MCF 10A (cell line): ENCODE measurements at regions of chr12 and their contacts with region 1.

Region 1: DNA sequence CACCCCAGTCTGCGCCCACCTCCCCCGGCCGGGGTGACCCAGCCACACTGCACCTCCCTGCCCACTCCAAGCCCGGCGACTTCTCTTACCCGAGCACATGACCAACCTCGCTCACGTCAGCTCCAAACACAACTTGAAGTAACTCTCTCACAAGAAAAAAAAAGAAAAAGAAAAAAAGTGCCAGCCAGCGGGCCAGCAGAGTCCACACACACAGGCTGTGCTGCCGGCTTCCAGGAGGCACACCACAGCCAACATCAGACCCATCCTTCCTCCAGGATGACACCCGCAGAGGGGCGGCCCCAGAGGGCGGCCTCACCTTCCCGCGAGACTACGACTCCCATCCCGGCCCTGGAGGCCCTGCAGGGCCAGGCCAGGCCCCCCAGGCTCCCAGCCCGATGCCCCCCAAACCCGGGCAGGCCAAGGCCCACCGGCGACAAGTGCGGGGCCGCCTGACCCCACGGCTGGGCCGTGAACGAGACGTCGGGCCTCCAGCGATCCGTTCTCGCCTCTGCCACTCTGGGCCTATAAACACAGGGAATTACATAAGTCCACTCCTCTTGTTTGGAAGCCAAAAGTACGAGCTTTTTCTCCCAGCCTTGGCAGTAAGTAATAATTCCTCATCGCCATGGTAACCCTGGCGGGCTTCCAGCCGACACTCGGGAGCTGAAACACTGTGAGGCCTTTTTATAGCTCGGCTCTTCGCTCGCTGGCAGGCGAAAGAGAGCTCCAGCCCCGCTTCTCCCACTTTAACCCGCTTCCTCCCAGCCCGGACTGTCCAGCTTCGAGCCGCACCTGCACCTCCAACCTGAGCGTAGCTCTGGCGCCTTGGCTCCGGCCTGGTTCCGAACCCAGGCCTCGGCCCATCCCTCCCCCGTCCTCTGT is 49.1 kb downstream of the NCOR2 start:
- DNase-seq: peak; percentile 99
- H3K4me3 Mint-ChIP-seq: peak overlapping the region; percentile 91
- H3K27ac Mint-ChIP-seq: peak overlapping the region; percentile 96
- H3K4me1 Mint-ChIP-seq: peaks cover 39% of the 10 kb centered on the region
- H3K27me3 Mint-ChIP-seq: no peaks in the 10 kb centered on the region
- CTCF ChIP-seq: no peak

Region 2: DNA sequence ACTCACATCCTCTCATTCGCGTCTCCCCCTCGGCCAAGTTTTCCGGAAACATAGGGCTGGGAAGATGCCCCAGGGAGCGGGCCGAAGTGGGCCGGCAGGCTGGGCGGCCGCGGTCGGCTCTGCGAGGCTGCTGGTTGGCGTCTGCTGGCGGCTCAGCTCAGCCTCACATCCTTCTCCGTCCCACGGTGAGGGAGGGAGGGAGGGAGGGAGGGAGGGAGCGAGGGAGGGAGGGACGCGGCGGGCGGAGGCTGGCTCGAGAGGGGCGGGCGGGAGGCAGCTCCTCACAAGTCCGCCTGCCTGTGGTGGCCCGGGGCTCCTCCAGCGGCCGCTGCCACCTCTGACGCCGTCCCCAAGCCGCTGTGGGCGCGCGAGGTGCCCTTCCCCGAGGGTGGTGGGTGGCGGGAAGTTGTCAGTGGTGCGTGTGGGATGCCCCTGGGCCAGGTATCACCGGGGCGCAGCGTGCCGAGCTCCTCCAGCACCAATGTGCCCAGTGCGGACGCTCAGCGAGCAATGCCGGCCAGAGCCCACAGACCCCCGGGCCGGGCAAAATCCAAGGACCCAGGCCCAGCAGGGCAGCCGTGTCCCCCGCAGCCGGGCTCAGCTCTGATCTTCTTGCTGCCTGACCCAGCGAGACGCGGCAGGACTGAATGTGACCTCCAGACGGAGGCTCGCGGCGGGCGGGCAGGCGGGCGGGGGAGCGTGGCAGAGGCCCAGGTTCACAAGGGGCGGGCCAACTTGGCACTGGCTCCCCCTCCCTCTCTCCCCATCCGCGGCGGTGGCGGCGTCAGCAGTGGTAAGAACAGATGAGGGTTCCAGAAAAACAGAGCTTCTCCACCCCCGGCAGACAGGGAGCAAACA is 129.4 kb before region 1 on chr12:
- CTCF ChIA-PET with region 1: no interaction called
- POLR2A ChIA-PET with region 1: interaction called, 5 read pairs
- intact Hi-C with region 1: loop called (anchors 10 kb)
- DNase-seq: peak; percentile 83
- H3K4me3 Mint-ChIP-seq: peak overlapping the region; percentile 81
- H3K27ac Mint-ChIP-seq: peak overlapping the region; percentile 69
- H3K4me1 Mint-ChIP-seq: peaks cover 26% of the 10 kb centered on the region
- H3K27me3 Mint-ChIP-seq: no peaks in the 10 kb centered on the region
- CTCF ChIP-seq: no peak

Region 3: DNA sequence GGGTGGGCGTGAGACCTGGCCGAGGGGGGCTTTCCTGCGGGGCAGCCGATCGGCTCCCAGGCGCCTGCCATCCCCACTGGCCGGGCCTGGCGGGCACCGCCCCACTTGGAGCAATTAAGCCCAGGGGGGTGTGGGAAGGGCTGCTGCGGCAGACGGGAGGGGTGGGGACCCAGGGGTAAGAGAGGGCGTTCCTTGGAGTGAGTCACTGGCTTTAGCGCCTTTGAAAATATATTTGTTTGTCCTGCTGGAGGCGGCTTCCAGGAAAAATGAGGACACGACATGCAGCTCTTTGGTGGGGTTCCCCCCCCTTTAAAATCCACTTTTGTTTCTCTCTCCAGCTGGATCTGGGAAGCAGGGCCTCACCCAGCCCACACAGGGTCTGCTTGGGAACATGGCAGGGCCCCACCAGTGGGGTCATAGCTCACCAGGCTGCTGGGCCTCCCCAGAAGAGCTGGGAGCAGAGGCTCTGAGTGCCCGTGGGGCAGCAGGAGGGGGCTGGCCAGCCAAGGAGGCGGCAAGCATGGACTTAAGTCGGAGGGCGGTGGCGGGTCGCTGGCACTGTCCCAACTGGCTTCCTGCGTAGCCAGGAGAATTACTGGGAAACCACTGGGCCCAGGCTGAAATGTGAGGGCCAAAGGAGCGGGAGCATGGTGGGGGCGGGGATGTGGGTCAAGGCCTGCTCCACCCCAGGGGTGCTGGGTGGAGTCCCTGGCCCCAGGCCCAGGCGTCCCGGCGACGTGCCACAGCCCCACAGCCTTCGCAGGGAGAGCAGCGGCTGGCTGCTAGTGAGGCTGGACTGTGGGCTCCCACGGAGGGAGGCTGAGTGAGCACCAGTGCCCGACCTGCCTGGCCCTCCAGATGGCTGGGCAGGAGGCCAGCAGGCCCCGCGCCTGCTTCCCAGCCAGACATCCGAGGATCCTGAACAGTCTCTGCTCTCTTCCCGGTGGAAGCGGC is 95.4 kb before region 1 on chr12:
- CTCF ChIA-PET with region 1: no interaction called
- POLR2A ChIA-PET with region 1: interaction called, 5 read pairs
- intact Hi-C with region 1: loop called (anchors 5 kb)
- DNase-seq: peak; percentile 92
- H3K4me3 Mint-ChIP-seq: peak overlapping the region; percentile 48
- H3K27ac Mint-ChIP-seq: peak overlapping the region; percentile 49
- H3K4me1 Mint-ChIP-seq: peaks cover 18% of the 10 kb centered on the region
- H3K27me3 Mint-ChIP-seq: no peaks in the 10 kb centered on the region
- CTCF ChIP-seq: no peak

Region 4: GRCh38 chr12:124567661-124568373 is 49.5 kb after region 1 on chr12:
- CTCF ChIA-PET with region 1: interaction called, 3 read pairs
- POLR2A ChIA-PET with region 1: interaction called, 44 read pairs
- intact Hi-C with region 1: loop called (anchors 1 kb)
- DNase-seq: peak; percentile 79
- H3K4me3 Mint-ChIP-seq: peak overlapping the region; percentile 72
- H3K27ac Mint-ChIP-seq: no peak overlapping the region
- H3K4me1 Mint-ChIP-seq: peaks cover 6% of the 10 kb centered on the region
- H3K27me3 Mint-ChIP-seq: no peaks in the 10 kb centered on the region
- CTCF ChIP-seq: no peak

Region 5: DNA sequence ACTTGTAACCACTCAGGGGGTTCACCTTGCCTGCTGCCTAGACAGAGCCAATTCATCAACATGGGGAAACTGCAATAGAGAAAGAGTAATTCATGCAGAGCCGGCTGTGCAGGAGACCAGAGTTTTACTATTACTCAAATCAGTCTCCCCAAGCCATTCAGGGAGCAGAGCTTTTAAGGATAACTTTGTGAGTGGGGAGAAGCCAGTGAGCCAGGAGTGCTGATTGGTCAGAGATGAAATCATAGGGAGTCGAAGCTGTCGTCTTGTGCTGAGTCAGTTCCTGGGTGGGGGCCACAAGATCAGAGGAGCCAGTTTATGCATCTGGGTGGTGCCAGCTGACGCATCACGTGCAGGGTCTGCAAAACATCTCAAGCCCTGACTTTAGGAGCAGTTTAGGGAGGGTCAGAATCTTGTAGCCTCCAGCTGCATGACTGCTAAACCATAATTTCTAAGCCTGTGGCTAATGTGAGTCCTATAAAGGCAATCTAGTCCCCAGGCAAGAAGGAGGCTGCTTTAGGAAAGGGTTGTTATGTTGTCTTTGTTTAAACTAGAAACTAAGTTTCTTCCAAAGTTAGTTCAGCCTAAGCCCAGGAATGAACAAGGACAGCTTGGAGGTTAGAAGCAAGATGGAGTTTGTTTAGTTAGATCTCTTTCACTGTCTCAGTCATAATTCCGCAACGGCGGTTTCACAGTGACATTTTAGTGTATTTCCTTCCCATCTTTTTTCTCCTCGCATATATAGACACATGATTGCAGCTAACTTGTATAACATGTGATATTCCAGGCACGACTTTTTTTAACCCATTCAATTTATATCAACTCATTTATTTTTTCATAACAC is 118.1 kb after region 1 on chr12:
- CTCF ChIA-PET with region 1: interaction called, 3 read pairs
- POLR2A ChIA-PET with region 1: interaction called, 25 read pairs
- intact Hi-C with region 1: no loop called
- DNase-seq: peak; percentile 67
- H3K4me3 Mint-ChIP-seq: no peak overlapping the region
- H3K27ac Mint-ChIP-seq: peak overlapping the region; percentile 59
- H3K4me1 Mint-ChIP-seq: peaks cover 56% of the 10 kb centered on the region
- H3K27me3 Mint-ChIP-seq: no peaks in the 10 kb centered on the region
- CTCF ChIP-seq: no peak

Region 6: DNA sequence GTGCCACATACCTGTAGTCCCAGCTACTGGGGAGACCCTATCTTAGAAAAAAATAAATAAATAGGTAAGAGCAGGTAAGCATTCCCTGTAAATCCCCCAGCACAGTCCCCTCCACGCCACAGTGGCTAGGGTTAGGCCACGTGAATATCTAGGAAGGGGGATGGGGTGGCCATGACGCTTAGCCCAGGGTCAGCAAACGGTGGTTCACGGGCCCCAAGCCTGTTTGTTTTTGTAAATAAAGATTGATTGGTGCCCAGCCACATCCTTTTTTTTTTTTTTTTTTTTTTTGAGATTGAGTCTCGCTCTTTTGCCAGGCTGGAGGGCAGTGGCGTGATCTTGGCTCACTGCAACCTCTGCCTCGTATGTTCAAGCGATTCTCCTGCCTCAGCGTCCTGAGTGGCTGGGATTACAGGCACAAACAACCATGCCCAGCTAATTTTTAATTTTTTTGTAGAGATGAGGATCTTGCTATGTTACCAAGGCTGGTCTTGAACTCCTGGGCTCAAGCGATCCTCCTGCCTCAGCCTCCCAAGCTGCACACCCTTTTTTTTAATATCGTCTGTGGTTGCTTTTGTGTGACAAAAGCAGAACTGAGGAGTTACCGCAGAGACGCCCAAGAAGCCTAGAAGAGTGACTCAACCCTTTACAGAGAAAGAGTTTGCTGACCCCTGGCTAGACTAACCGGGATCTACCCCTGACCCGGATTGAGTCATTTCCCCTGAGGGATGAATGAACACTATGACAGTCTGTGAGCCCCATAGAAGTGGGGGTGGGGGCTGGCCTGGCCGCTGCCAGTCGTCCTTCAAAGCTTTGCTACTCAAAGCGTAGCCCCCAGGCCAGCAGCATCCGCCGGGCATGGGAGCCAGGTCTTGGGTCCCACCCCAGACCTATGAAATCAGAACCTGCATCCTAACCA is 162.8 kb after region 1 on chr12:
- CTCF ChIA-PET with region 1: interaction called, 3 read pairs
- POLR2A ChIA-PET with region 1: interaction called, 12 read pairs
- intact Hi-C with region 1: loop called (anchors 1 kb)
- DNase-seq: peak; percentile 91
- H3K4me3 Mint-ChIP-seq: no peak overlapping the region
- H3K27ac Mint-ChIP-seq: peak overlapping the region; percentile 18
- H3K4me1 Mint-ChIP-seq: peaks cover 46% of the 10 kb centered on the region
- H3K27me3 Mint-ChIP-seq: no peaks in the 10 kb centered on the region
- CTCF ChIP-seq: peak; percentile 40

Region 7: DNA sequence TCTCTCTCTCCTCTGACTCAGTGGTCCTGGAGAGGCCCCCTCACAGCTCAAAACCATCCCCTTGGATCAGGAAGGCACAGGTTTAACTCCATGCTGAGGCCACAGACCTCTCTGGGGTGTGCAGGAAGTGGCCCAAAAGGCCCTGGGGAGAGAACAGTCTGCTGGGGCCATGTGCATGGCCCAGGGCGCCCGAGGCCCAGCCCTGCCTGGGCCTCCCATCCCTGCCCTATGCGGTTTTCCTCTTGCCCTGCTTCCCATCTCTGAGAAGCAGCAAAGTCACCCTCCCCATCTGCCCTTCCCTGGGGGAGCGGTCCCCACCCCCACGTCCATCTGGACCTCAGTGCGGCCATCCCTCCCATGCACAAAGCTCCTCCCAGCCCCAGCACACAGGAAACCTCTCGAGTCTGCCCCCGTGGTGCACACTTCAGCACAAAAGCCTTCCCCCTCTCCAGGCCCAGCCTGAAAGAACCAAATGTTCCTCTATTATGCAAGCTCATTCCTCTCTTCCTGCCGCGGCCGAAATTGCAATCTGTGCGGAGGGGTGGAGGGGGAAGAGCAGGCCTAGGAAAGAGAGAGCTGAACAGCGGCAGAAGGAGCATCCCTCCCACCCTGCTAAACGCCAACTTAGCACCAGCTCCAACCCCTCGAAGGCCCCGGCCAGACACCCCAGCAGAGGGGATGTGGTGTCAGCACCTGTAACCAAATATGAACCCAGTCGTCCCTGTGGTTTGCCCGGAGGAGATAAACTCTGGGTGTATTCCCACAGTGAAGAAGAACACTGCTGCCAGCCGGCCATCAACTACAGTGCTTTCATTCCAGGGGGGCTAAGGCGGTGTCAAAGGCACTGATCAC is 236.9 kb after region 1 on chr12:
- CTCF ChIA-PET with region 1: interaction called, 9 read pairs
- POLR2A ChIA-PET with region 1: interaction called, 15 read pairs
- intact Hi-C with region 1: no loop called
- DNase-seq: peak; percentile 90
- H3K4me3 Mint-ChIP-seq: peak overlapping the region; percentile 56
- H3K27ac Mint-ChIP-seq: peak overlapping the region; percentile 57
- H3K4me1 Mint-ChIP-seq: peaks cover 42% of the 10 kb centered on the region
- H3K27me3 Mint-ChIP-seq: no peaks in the 10 kb centered on the region
- CTCF ChIP-seq: no peak